Activated CD4-positive, alpha-beta memory T cell treated with anti-CD3 and anti-CD28 coated beads for 36 hours (primary cell): ENCODE measurements at regions of chr2 and their contacts with region 1.

Region 1: DNA sequence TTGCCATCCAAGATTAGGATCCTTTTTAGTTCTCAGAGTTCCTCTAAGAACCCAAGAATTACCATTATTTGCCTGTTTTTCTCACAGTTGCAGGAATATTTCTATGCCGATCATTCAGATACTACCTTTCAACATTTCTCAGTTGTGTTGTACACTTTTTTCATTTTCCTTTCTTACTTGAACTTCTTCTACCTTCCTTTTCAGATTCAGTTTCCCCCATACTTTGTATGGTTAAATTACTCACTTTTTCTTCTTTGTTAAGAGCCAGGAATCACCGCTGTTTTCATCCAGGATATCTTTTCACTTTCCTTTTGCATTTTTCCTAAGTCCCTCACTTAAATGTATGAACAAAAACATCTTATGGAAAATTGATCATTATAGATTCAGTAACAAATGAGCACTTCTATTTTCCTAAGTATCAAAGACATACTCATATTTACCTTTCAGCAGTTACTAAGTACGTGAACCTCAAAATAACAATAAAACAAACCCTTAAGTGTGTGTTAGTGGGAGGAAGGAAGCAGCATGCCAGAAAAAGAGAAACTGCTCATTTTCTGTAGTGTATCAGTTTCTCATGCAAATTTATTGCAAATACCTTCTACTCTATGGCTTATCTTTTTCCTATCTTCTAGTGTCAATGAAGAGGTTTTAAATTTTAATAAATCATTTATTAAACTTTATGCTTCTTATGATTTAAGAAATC is 64.3 kb upstream of the STAT1 start:
- DNase-seq: no peak
- H3K4me3 Mint-ChIP-seq: peak overlapping the region; percentile 48
- H3K27ac Mint-ChIP-seq: peak overlapping the region; percentile 69
- H3K4me1 Mint-ChIP-seq: peaks cover 29% of the 10 kb centered on the region
- H3K27me3 Mint-ChIP-seq: no peaks in the 10 kb centered on the region

Region 2: GRCh38 chr2:191059308-191059707 is 19.0 kb before region 1 on chr2:
- CTCF ChIA-PET with region 1: interaction called, 3 read pairs
- POLR2A ChIA-PET with region 1: no interaction called
- intact Hi-C with region 1: loop called (anchors 2 kb)
- DNase-seq: no peak
- H3K4me3 Mint-ChIP-seq: no peak overlapping the region
- H3K27ac Mint-ChIP-seq: peak overlapping the region; percentile 10
- H3K4me1 Mint-ChIP-seq: peaks cover 68% of the 10 kb centered on the region
- H3K27me3 Mint-ChIP-seq: no peaks in the 10 kb centered on the region

Region 3: GRCh38 chr2:191066197-191066918 is 12.0 kb before region 1 on chr2:
- CTCF ChIA-PET with region 1: interaction called, 3 read pairs
- POLR2A ChIA-PET with region 1: no interaction called
- intact Hi-C with region 1: loop called (anchors 1 kb)
- DNase-seq: peak; percentile 26
- H3K4me3 Mint-ChIP-seq: peak overlapping the region; percentile 63
- H3K27ac Mint-ChIP-seq: peak overlapping the region; percentile 85
- H3K4me1 Mint-ChIP-seq: peaks cover 79% of the 10 kb centered on the region
- H3K27me3 Mint-ChIP-seq: no peaks in the 10 kb centered on the region

Region 4: DNA sequence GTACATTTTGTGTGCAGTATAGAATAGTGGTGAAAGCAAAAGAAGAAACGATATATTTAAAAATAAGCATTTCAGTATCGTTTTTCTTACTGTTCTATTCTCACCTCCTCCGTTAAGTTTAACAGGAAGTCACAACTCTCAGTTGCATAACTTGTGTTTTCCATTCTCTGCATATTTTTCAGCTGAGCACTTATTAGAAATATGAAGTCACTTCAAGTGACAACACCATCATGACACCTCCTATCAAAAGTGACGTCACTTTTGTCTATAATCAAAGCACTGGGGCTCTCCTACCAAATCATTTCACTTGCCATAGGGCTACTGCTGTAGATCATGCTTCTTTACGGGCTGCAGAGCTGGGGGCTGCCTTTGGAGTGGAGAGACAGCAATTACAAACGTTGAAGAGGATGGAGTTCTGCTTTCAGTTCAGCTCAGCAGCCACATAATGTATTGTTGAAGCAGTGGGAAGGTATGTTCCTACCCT is 36.1 kb after region 1 on chr2:
- CTCF ChIA-PET with region 1: no interaction called
- POLR2A ChIA-PET with region 1: interaction called, 3 read pairs
- intact Hi-C with region 1: loop called (anchors 1 kb)
- DNase-seq: peak; percentile 57
- H3K4me3 Mint-ChIP-seq: peak overlapping the region; percentile 66
- H3K27ac Mint-ChIP-seq: peak overlapping the region; percentile 88
- H3K4me1 Mint-ChIP-seq: peaks cover 70% of the 10 kb centered on the region
- H3K27me3 Mint-ChIP-seq: no peaks in the 10 kb centered on the region

Region 5: DNA sequence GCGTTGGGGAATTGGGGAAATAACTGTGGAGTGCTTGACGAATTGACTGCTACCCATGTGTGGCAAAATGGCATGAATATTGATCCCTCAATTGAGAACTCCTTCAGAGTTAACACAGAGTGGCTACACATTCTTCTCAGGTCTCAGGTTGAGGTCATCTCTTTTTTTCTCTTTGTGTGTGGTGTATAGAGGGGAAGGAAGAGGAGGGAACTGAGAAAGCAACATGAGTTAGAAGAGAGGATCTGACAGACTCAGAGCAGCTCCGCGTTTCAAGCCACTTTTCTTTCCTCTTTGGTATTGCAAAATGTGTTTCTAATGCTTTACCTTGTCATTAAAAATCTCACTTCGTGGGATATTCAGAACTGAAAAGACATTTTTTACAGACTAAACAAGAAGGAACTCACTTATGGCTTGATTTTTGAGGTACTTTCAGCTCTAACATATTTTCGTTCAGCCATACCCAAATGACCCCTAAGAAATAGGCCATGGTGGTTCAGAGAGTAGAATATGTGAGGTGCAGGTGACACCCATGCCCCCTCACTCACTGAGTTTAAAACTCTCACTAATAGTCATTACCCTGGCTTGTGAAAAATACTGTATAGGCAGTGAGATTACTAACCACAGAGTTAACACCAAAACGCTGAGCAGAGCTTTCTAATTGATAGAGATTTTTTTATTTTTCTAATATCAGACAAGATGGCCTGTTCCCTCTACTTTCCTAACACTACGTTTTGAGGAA is 50.0 kb after region 1 on chr2:
- CTCF ChIA-PET with region 1: no interaction called
- POLR2A ChIA-PET with region 1: no interaction called
- intact Hi-C with region 1: loop called (anchors 2 kb)
- DNase-seq: no peak
- H3K4me3 Mint-ChIP-seq: peak overlapping the region; percentile 52
- H3K27ac Mint-ChIP-seq: peak overlapping the region; percentile 28
- H3K4me1 Mint-ChIP-seq: peaks cover 70% of the 10 kb centered on the region
- H3K27me3 Mint-ChIP-seq: no peaks in the 10 kb centered on the region